ENCODE measurements at regions of chr1 and their contacts with region 1.

Region 1: GRCh38 chr1:41097105-41097504 is 75.6 kb upstream of the SLFNL1 start:
- DNase-seq: no peak
- H3K4me3 ChIP-seq: no peak overlapping the region
- CTCF ChIP-seq: no peak

Region 2: GRCh38 chr1:40984066-40984465 is 113.0 kb before region 1 on chr1:
- in situ Hi-C with region 1: no loop called
- DNase-seq: peak; percentile 42
- H3K4me3 ChIP-seq: no peak overlapping the region
- CTCF ChIP-seq: no peak

Region 3: DNA sequence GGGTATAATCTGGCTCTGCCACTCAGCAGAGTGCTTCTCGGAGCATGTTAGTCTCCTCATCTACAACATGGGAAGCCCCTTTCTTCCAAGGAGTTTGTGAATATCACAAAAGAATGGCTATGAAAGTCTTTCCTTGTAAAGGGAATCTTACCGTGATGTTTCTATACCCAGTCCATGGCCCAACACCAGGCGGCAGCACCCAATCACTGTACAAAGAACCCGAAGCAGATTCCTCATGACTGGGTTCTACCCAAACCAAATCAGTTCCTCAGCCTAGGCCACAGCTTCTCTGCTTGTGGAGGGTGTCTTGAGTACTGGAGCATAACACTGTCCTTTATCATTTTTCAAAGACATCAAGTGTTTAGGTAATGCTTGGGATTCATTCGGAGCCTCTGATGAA is 59.0 kb before region 1 on chr1:
- in situ Hi-C with region 1: loop called (anchors 10 kb)
- DNase-seq: no peak
- H3K4me3 ChIP-seq: no peak overlapping the region
- CTCF ChIP-seq: peak; percentile 35